Sigmoid colon (tissue), 7 donors: ENCODE measurements at regions of chr15 and their contacts with region 1.

Region 1: GRCh38 chr15:77821188-77821958 is 188.7 kb upstream of the LINGO1 start:
- DNase-seq: no peak
- H3K4me3 ChIP-seq: no peak overlapping the region
- H3K27ac ChIP-seq: no peak overlapping the region
- H3K4me1 ChIP-seq: peaks cover 0 to 23% (median 21%) of the 10 kb centered on the region in 4 donors
- H3K27me3 ChIP-seq: peaks cover 24 to 62% (median 32%) of the 10 kb centered on the region in 3 donors
- CTCF ChIP-seq: peak in 3 of 4 experiments; percentile 40 to 47 (median 47)
- EP300 ChIP-seq: no peak
- POLR2A ChIP-seq: no peak

Region 2: DNA sequence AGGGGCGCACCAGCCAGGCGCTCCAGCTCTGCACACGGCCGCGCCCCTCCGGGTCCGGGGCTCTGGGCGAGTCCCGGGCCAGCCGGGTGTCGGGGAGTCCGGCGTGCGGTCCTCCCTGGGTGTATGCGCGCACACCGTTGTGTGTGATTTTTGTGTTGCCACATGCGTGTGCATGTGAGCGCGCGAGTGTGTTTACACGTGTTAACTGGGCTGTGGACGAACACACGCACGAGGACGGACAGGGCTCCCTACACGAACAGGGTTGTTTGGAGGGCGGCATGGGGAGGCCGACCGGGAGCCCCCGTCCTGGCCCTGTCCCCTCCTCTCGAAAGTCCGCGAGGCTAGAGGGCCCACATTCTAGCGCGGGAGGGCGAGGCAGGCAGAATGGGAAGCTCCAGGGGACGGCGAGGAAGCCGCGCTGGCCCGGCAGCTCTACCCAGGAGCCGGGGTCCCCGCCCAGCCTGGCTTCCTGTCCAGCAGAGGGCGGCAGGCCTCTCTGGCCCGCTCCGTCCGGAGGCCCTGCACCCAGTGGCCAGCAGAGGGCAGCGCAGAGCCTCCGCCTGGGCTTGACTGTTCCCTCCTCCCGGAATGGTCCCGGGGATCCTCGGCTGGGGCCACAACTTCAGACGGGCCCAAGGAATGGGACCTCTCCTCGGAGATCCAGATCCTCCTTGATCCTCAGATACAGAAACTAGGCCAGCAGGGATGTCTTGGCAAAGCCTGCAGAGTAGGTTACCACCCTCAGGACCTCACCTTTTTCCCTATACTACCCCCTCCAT is 188.1 kb before region 1 on chr15:
- intact Hi-C with region 1: loop called (anchors 5 kb)
- DNase-seq: peak; percentile 88
- H3K4me3 ChIP-seq: peak overlapping the region; percentile 34 to 52 (median 48)
- H3K27ac ChIP-seq: peak overlapping the region in 2 of 4 donors; percentile 6 to 13
- H3K4me1 ChIP-seq: peaks cover 0 to 32% (median 22%) of the 10 kb centered on the region in 4 donors
- H3K27me3 ChIP-seq: peaks cover 29 to 66% (median 51%) of the 10 kb centered on the region in 3 donors
- CTCF ChIP-seq: peak; percentile 90 to 100 (median 98)
- EP300 ChIP-seq: no peak
- POLR2A ChIP-seq: no peak

Region 3: GRCh38 chr15:77753270-77753873 is 68.0 kb before region 1 on chr15:
- intact Hi-C with region 1: no loop called
- DNase-seq: no peak
- H3K4me3 ChIP-seq: no peak overlapping the region
- H3K27ac ChIP-seq: no peak overlapping the region
- H3K4me1 ChIP-seq: no peaks in the 10 kb centered on the region
- H3K27me3 ChIP-seq: peaks cover 0 to 3% (median 0%) of the 10 kb centered on the region in 3 donors
- CTCF ChIP-seq: no peak
- EP300 ChIP-seq: no peak
- POLR2A ChIP-seq: no peak

Region 4: GRCh38 chr15:77901974-77902750 is 80.8 kb after region 1 on chr15:
- intact Hi-C with region 1: no loop called
- DNase-seq: peak; percentile 55
- H3K4me3 ChIP-seq: no peak overlapping the region
- H3K27ac ChIP-seq: no peak overlapping the region
- H3K4me1 ChIP-seq: no peaks in the 10 kb centered on the region
- H3K27me3 ChIP-seq: no peaks in the 10 kb centered on the region
- CTCF ChIP-seq: no peak
- EP300 ChIP-seq: no peak
- POLR2A ChIP-seq: no peak